ENCODE measurements at regions of chr14 and their contacts with region 1.

Region 1: GRCh38 chr14:24299255-24300195 is at the starts of genes DHRS1 and NOP9:
- DNase-seq: peak; percentile 89 to 93
- H3K4me3 ChIP-seq: peak within 1 kb of the TSS; percentile 88
- H3K4me3 Mint-ChIP-seq: peak within 1 kb of the TSS; percentile 96
- H3K27ac Mint-ChIP-seq: peak within 1 kb of the TSS; percentile 94
- H3K4me1 ChIP-seq: peaks cover 5% of the 10 kb centered on the region
- H3K4me1 Mint-ChIP-seq: peaks cover 15% of the 10 kb centered on the region
- H3K27me3 ChIP-seq: no peaks in the 10 kb centered on the region
- H3K27me3 Mint-ChIP-seq: no peaks in the 10 kb centered on the region
- CTCF ChIP-seq: no peak
- total RNA-seq, gene DHRS1: 15.6 and 18.1 TPM in 2 replicates
- total RNA-seq, gene NOP9: 35.1 and 38.3 TPM in 2 replicates

Region 2: GRCh38 chr14:24215495-24216344 is 83.8 kb before region 1 on chr14 and contains the start of gene MDP1:
- CTCF ChIA-PET with region 1: interaction called, 5 read pairs
- POLR2A ChIA-PET with region 1: no interaction called
- intact Hi-C with region 1: loop called (anchors 1 kb)
- DNase-seq: peak; percentile 82 to 85
- H3K4me3 ChIP-seq: peak within 1 kb of the TSS; percentile 70
- H3K4me3 Mint-ChIP-seq: peak within 1 kb of the TSS; percentile 87
- H3K27ac Mint-ChIP-seq: peak within 1 kb of the TSS; percentile 88
- H3K4me1 ChIP-seq: peaks cover 12% of the 10 kb centered on the region
- H3K4me1 Mint-ChIP-seq: peaks cover 13% of the 10 kb centered on the region
- H3K27me3 ChIP-seq: no peaks in the 10 kb centered on the region
- H3K27me3 Mint-ChIP-seq: no peaks in the 10 kb centered on the region
- CTCF ChIP-seq: peak; percentile 13 to 75
- total RNA-seq, gene MDP1: 19.6 and 20.5 TPM in 2 replicates

Region 3: DNA sequence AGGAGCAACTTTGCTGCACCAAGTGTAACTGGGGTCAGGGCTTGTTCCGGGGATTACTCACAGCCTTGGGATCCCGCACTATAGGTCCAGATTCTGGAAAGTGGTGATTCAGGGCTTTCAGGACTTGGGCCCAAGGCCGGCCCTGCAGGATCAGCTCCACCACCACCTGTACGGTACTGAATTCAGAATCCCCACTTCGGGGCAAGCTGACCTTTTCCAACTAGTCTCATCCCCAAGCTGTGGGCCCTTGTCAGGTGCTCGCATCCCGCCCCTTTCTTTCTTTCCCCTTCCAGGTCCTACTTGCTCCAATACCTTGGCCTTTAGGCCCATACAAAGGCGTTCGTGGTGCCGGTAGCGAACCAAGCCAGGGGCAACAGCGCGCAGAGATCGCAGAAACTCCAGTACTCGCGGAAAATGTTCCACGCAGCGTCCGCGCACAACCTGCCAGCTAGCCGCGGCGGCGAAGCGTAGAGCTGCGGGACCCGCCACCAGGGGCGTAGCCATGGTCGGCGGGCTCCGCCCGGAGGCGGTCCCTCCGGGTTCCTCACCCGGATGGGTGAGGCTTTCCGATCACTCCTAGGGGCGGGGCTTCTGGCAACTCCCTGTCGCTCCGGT is 57.6 kb before region 1 on chr14:
- CTCF ChIA-PET with region 1: interaction called, 157 read pairs
- POLR2A ChIA-PET with region 1: interaction called, 36 read pairs
- intact Hi-C with region 1: loop called (anchors 1 kb)
- DNase-seq: peak; percentile 95
- H3K4me3 ChIP-seq: peak overlapping the region; percentile 71
- H3K4me3 Mint-ChIP-seq: peak overlapping the region; percentile 74
- H3K27ac Mint-ChIP-seq: peak overlapping the region; percentile 91
- H3K4me1 ChIP-seq: no peaks in the 10 kb centered on the region
- H3K4me1 Mint-ChIP-seq: peaks cover 9% of the 10 kb centered on the region
- H3K27me3 ChIP-seq: no peaks in the 10 kb centered on the region
- H3K27me3 Mint-ChIP-seq: no peaks in the 10 kb centered on the region
- CTCF ChIP-seq: peak; percentile 49 to 58

Region 4: GRCh38 chr14:24251880-24252288 is 47.6 kb before region 1 on chr14:
- CTCF ChIA-PET with region 1: interaction called, 16 read pairs
- POLR2A ChIA-PET with region 1: interaction called, 5 read pairs
- intact Hi-C with region 1: no loop called
- DNase-seq: no peak
- H3K4me3 ChIP-seq: no peak overlapping the region
- H3K4me3 Mint-ChIP-seq: no peak overlapping the region
- H3K27ac Mint-ChIP-seq: no peak overlapping the region
- H3K4me1 ChIP-seq: peaks cover 13% of the 10 kb centered on the region
- H3K4me1 Mint-ChIP-seq: no peaks in the 10 kb centered on the region
- H3K27me3 ChIP-seq: no peaks in the 10 kb centered on the region
- H3K27me3 Mint-ChIP-seq: no peaks in the 10 kb centered on the region
- CTCF ChIP-seq: no peak

Region 5: DNA sequence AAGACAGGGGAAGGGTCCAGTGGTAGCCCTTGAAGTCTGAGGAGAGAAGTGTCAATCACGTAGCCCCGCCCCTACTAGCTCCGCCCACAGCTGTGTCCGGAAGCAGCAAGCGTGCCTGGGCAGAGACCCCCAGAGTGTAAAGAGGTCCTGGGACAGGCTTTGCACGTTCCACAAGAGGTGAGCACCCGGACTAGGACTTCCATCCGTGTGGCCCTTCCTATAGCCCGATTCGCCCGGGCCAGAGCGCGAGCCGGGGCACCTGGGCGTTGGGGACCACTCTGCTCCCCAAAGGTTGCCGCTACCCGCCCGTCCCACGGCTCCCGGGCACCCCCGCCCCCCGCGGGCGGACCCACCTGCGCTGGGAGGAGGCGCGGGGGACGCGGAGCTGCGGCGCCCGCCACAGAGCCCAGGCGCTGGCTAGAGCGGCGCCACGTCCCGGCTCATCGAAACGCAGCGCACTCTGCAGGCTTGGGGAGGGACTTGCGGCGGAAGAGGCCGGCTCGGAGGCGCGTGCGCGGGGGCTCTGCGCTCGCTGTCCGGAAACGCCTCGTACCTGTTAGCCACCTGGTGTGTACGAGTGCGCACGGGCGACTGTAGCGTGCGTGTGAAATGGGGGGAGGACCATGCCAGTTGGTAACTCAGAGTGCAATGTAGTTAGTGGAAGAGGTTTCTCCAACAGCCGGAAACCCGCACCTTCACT is 28.2 kb before region 1 on chr14 and contains the start of gene RABGGTA:
- CTCF ChIA-PET with region 1: interaction called, 16 read pairs
- POLR2A ChIA-PET with region 1: interaction called, 4 read pairs
- intact Hi-C with region 1: loop called (anchors 1 kb)
- DNase-seq: peak; percentile 91 to 93
- H3K4me3 ChIP-seq: peak within 1 kb of the TSS; percentile 95
- H3K4me3 Mint-ChIP-seq: peak within 1 kb of the TSS; percentile 76
- H3K27ac Mint-ChIP-seq: peak within 1 kb of the TSS; percentile 74
- H3K4me1 ChIP-seq: peaks cover 5% of the 10 kb centered on the region
- H3K4me1 Mint-ChIP-seq: peaks cover 11% of the 10 kb centered on the region
- H3K27me3 ChIP-seq: no peaks in the 10 kb centered on the region
- H3K27me3 Mint-ChIP-seq: no peaks in the 10 kb centered on the region
- CTCF ChIP-seq: peak; percentile 65 to 82
- total RNA-seq, gene RABGGTA: 27.1 and 30.4 TPM in 2 replicates

Region 6: GRCh38 chr14:24310646-24311604 is 11.4 kb after region 1 on chr14 and contains the start of gene LTB4R:
- CTCF ChIA-PET with region 1: interaction called, 54 read pairs
- POLR2A ChIA-PET with region 1: interaction called, 4 read pairs
- intact Hi-C with region 1: loop called (anchors 1 kb)
- DNase-seq: no peak
- H3K4me3 ChIP-seq: no peak within 1 kb of the TSS
- H3K4me3 Mint-ChIP-seq: no peak within 1 kb of the TSS
- H3K27ac Mint-ChIP-seq: no peak within 1 kb of the TSS
- H3K4me1 ChIP-seq: peaks cover 25% of the 10 kb centered on the region
- H3K4me1 Mint-ChIP-seq: peaks cover 27% of the 10 kb centered on the region
- H3K27me3 ChIP-seq: no peaks in the 10 kb centered on the region
- H3K27me3 Mint-ChIP-seq: no peaks in the 10 kb centered on the region
- CTCF ChIP-seq: no peak
- total RNA-seq, gene LTB4R: 7.3 and 7.8 TPM in 2 replicates

Region 7: GRCh38 chr14:24351517-24351916 is 52.0 kb after region 1 on chr14:
- CTCF ChIA-PET with region 1: no interaction called
- POLR2A ChIA-PET with region 1: no interaction called
- intact Hi-C with region 1: no loop called
- DNase-seq: no peak
- H3K4me3 ChIP-seq: no peak overlapping the region
- H3K4me3 Mint-ChIP-seq: no peak overlapping the region
- H3K27ac Mint-ChIP-seq: no peak overlapping the region
- H3K4me1 ChIP-seq: peaks cover 4% of the 10 kb centered on the region; the same call in 1 of the 2 replicates
- H3K4me1 Mint-ChIP-seq: peaks cover 10% of the 10 kb centered on the region
- H3K27me3 ChIP-seq: no peaks in the 10 kb centered on the region
- H3K27me3 Mint-ChIP-seq: peaks cover 10% of the 10 kb centered on the region
- CTCF ChIP-seq: peak in 1 of 2 experiments; percentile 6

Region 8: GRCh38 chr14:24518851-24519250 is 219.3 kb after region 1 on chr14:
- CTCF ChIA-PET with region 1: no interaction called
- POLR2A ChIA-PET with region 1: no interaction called
- intact Hi-C with region 1: no loop called
- DNase-seq: no peak
- H3K4me3 ChIP-seq: no peak overlapping the region
- H3K4me3 Mint-ChIP-seq: no peak overlapping the region
- H3K27ac Mint-ChIP-seq: no peak overlapping the region
- H3K4me1 ChIP-seq: no peaks in the 10 kb centered on the region
- H3K4me1 Mint-ChIP-seq: no peaks in the 10 kb centered on the region
- H3K27me3 ChIP-seq: no peaks in the 10 kb centered on the region
- H3K27me3 Mint-ChIP-seq: peaks cover 17% of the 10 kb centered on the region
- CTCF ChIP-seq: no peak